CD4-positive, alpha-beta T cell (primary cell): ENCODE measurements at regions of chr6 and their contacts with region 1.

Region 1: DNA sequence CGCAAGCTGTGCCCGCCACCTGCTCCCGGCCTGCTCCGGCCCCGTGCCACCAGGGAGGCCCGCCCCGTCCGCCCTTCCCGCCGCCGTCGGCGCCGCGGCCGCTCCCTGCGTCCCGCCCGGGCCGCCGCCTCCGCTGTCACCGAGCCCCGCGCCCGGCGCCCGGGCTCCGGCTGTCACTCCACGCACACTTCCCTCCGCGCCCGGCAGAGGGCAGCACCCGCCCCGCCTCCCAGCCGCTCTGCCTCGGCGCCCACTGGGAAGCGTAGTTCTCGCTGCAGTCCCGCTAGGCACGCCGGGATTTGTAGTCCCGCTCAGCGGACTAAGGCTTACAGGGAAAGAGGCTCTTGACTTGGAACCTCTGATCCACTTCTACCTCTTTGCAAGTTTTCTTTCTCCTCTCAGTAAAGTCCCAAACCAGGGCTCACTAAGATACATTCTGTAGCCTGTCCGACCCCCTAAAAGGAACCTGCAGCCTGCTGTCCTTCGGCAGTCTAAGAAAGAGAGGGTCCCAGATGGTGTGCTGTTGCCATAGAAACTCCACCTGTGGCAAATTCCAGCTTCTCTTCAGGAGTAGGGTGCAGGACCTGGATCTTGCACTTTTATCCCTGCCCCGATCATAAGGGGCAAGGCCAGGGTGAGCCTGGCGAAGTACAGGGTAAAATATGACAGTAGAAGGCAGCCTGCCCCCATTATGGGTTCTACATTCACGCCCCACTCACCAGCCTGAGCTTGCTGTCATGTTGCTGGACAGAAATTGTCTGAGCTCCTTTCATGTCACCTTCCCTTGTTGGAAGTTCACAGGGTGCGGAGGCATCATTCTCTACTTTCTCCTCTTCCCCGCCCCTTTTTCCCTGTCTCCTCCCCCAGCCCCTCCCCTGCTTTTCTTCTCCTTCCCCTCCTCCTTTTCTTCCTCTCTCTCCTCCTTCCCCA is at the start of gene TFEB:
- DNase-seq: peak; percentile 89 to 96 (median 93)
- ATAC-seq: peak; percentile 70
- H3K4me3 ChIP-seq: peak within 1 kb of the TSS; percentile 73
- H3K4me3 Mint-ChIP-seq: peak within 1 kb of the TSS; percentile 97
- H3K27ac ChIP-seq: peak within 1 kb of the TSS; percentile 77 to 80
- H3K27ac Mint-ChIP-seq: peak within 1 kb of the TSS; percentile 88
- H3K4me1 ChIP-seq: peaks cover 37% of the 10 kb centered on the region
- H3K4me1 Mint-ChIP-seq: peaks cover 33% of the 10 kb centered on the region
- H3K27me3 ChIP-seq: peaks cover 0 to 3% of the 10 kb centered on the region in 2 experiments
- H3K27me3 Mint-ChIP-seq: no peaks in the 10 kb centered on the region
- CTCF ChIP-seq: peak; percentile 73
- total RNA-seq, gene TFEB: 23.8 to 24.1 TPM

Region 2: DNA sequence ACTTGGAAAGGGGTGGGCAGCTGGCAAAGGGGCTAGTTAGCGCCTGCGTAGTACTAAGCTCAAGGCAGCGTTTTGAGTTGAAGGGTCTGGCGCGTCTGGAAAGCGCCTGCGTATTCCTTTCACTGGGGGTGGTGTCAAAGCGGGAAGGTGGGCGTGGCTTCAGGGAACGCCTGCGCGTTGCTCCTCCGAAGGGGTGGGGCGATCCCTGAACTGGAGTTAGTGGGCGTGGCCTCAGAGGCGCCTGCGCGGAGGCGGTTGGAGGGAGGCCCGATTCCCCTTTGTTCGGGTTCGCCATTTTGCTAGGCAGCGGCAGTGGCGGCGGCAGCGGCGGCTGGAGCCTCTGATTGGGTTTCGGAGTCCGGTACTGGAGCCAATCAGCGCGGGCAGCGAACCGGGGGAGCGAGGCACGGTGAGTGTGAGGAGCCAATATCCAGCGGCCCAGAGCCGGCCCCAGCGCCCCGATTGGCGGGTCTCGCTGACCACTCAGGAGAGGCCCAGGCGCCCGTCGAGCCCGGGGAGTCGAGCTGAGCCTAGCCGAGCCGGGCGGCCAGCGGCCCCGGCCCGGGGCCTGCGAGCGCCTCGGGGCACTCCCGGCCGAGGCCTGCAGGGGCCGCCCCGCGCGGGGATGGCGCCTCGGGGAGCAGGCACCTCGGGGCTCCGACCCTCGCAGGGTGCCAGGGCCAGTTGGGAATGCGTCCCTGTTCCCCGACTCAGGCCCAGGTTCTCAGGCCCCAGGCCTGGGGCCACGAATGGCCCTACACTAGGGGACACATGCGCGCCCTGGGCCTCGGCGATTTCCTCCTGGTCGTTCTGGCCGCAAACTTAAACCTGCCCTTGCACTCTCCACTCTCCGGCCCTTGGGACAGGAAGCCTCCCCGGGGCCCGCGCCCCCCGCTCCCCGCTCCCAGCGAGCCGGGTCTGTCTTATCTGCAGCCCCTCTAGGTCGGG is 662.7 kb before region 1 on chr6 and contains the start of gene NFYA:
- CTCF ChIA-PET with region 1: no interaction called
- POLR2A ChIA-PET with region 1: interaction called, 4 read pairs
- intact Hi-C with region 1: loop called in 1 of 2 experiments (anchors 5 kb)
- DNase-seq: peak in 13 of 14 experiments; percentile 100
- ATAC-seq: peak; percentile 62
- H3K4me3 ChIP-seq: peak within 1 kb of the TSS; percentile 70
- H3K4me3 Mint-ChIP-seq: peak within 1 kb of the TSS; percentile 93
- H3K27ac ChIP-seq: peak within 1 kb of the TSS; percentile 95 to 96
- H3K27ac Mint-ChIP-seq: peak within 1 kb of the TSS; percentile 88
- H3K4me1 ChIP-seq: peaks cover 23% of the 10 kb centered on the region
- H3K4me1 Mint-ChIP-seq: peaks cover 51% of the 10 kb centered on the region
- H3K27me3 ChIP-seq: no peaks in the 10 kb centered on the region
- H3K27me3 Mint-ChIP-seq: no peaks in the 10 kb centered on the region
- CTCF ChIP-seq: peak; percentile 33
- total RNA-seq, gene NFYA: 26.7 to 27.3 TPM

Region 3: GRCh38 chr6:41602864-41603608 is 132.7 kb before region 1 on chr6:
- CTCF ChIA-PET with region 1: no interaction called
- POLR2A ChIA-PET with region 1: no interaction called
- intact Hi-C with region 1: loop called in 1 of 2 experiments (anchors 5 kb)
- DNase-seq: peak; percentile 54 to 86 (median 66)
- ATAC-seq: peak; percentile 80
- H3K4me3 ChIP-seq: no peak overlapping the region
- H3K4me3 Mint-ChIP-seq: no peak overlapping the region
- H3K27ac ChIP-seq: no peak overlapping the region
- H3K27ac Mint-ChIP-seq: no peak overlapping the region
- H3K4me1 ChIP-seq: peaks cover 8% of the 10 kb centered on the region
- H3K4me1 Mint-ChIP-seq: no peaks in the 10 kb centered on the region
- H3K27me3 ChIP-seq: peaks cover 0 to 3% of the 10 kb centered on the region in 2 experiments
- H3K27me3 Mint-ChIP-seq: no peaks in the 10 kb centered on the region
- CTCF ChIP-seq: peak; percentile 80

Region 4: GRCh38 chr6:41644297-41644879 is 91.3 kb before region 1 on chr6:
- CTCF ChIA-PET with region 1: no interaction called
- POLR2A ChIA-PET with region 1: no interaction called
- intact Hi-C with region 1: no loop called
- DNase-seq: no peak
- ATAC-seq: no peak
- H3K4me3 ChIP-seq: no peak overlapping the region
- H3K4me3 Mint-ChIP-seq: no peak overlapping the region
- H3K27ac ChIP-seq: no peak overlapping the region
- H3K27ac Mint-ChIP-seq: no peak overlapping the region
- H3K4me1 ChIP-seq: no peaks in the 10 kb centered on the region
- H3K4me1 Mint-ChIP-seq: peaks cover 6% of the 10 kb centered on the region
- H3K27me3 ChIP-seq: peaks cover 1 to 11% of the 10 kb centered on the region in 2 experiments
- H3K27me3 Mint-ChIP-seq: peaks cover 44% of the 10 kb centered on the region
- CTCF ChIP-seq: no peak

Region 5: GRCh38 chr6:41779793-41780545 is 44.3 kb after region 1 on chr6 and contains the start of gene FRS3:
- CTCF ChIA-PET with region 1: no interaction called
- POLR2A ChIA-PET with region 1: interaction called, 3 read pairs
- intact Hi-C with region 1: loop called in 1 of 2 experiments (anchors 1 kb)
- DNase-seq: peak; percentile 95 to 100 (median 99)
- ATAC-seq: peak; percentile 97
- H3K4me3 ChIP-seq: peak within 1 kb of the TSS; percentile 75
- H3K4me3 Mint-ChIP-seq: peak within 1 kb of the TSS; percentile 99
- H3K27ac ChIP-seq: no peak within 1 kb of the TSS
- H3K27ac Mint-ChIP-seq: peak within 1 kb of the TSS; percentile 68
- H3K4me1 ChIP-seq: peaks cover 24% of the 10 kb centered on the region
- H3K4me1 Mint-ChIP-seq: peaks cover 25% of the 10 kb centered on the region
- H3K27me3 ChIP-seq: peaks cover 7 to 8% of the 10 kb centered on the region in 2 experiments
- H3K27me3 Mint-ChIP-seq: peaks cover 11% of the 10 kb centered on the region
- CTCF ChIP-seq: peak; percentile 75
- total RNA-seq, gene FRS3: 4.6 to 5.4 TPM

Region 6: GRCh38 chr6:41920921-41921711 is 185.4 kb after region 1 on chr6 and contains the starts of genes BYSL and MED20:
- CTCF ChIA-PET with region 1: interaction called, 5 read pairs
- POLR2A ChIA-PET with region 1: no interaction called
- intact Hi-C with region 1: loop called in 1 of 2 experiments (anchors 2 kb)
- DNase-seq: peak; percentile 89 to 97 (median 93)
- ATAC-seq: peak; percentile 90
- H3K4me3 ChIP-seq: peak within 1 kb of the TSS; percentile 78
- H3K4me3 Mint-ChIP-seq: peak within 1 kb of the TSS; percentile 99
- H3K27ac ChIP-seq: peak within 1 kb of the TSS; percentile 97 to 98
- H3K27ac Mint-ChIP-seq: peak within 1 kb of the TSS; percentile 94
- H3K4me1 ChIP-seq: peaks cover 31% of the 10 kb centered on the region
- H3K4me1 Mint-ChIP-seq: peaks cover 55% of the 10 kb centered on the region
- H3K27me3 ChIP-seq: no peaks in the 10 kb centered on the region
- H3K27me3 Mint-ChIP-seq: no peaks in the 10 kb centered on the region
- CTCF ChIP-seq: peak; percentile 97
- total RNA-seq, gene BYSL: 1.2 to 1.6 TPM
- total RNA-seq, gene MED20: 1.3 to 1.6 TPM

Region 7: GRCh38 chr6:42217519-42218367 is 482.1 kb after region 1 on chr6 and contains the start of gene MRPS10:
- CTCF ChIA-PET with region 1: no interaction called
- POLR2A ChIA-PET with region 1: no interaction called
- intact Hi-C with region 1: loop called in 1 of 2 experiments (anchors 2 kb)
- DNase-seq: peak; percentile 84 to 96 (median 86)
- ATAC-seq: peak; percentile 98
- H3K4me3 ChIP-seq: peak within 1 kb of the TSS; percentile 77
- H3K4me3 Mint-ChIP-seq: peak within 1 kb of the TSS; percentile 97
- H3K27ac ChIP-seq: peak within 1 kb of the TSS; percentile 60 to 65
- H3K27ac Mint-ChIP-seq: peak within 1 kb of the TSS; percentile 92
- H3K4me1 ChIP-seq: peaks cover 26% of the 10 kb centered on the region
- H3K4me1 Mint-ChIP-seq: peaks cover 23% of the 10 kb centered on the region
- H3K27me3 ChIP-seq: no peaks in the 10 kb centered on the region
- H3K27me3 Mint-ChIP-seq: no peaks in the 10 kb centered on the region
- CTCF ChIP-seq: no peak
- total RNA-seq, gene MRPS10: 17.1 to 18.4 TPM

Region 8: GRCh38 chr6:43629505-43630300 is 1894.0 kb after region 1 on chr6:
- CTCF ChIA-PET with region 1: no interaction called
- POLR2A ChIA-PET with region 1: no interaction called
- intact Hi-C with region 1: loop called in 1 of 2 experiments (anchors 5 kb)
- DNase-seq: peak; percentile 65 to 96 (median 82)
- ATAC-seq: peak; percentile 58
- H3K4me3 ChIP-seq: peak overlapping the region; percentile 92
- H3K4me3 Mint-ChIP-seq: peak overlapping the region; percentile 98
- H3K27ac ChIP-seq: peak overlapping the region; percentile 86 to 90
- H3K27ac Mint-ChIP-seq: peak overlapping the region; percentile 94
- H3K4me1 ChIP-seq: peaks cover 40% of the 10 kb centered on the region
- H3K4me1 Mint-ChIP-seq: peaks cover 41% of the 10 kb centered on the region
- H3K27me3 ChIP-seq: no peaks in the 10 kb centered on the region
- H3K27me3 Mint-ChIP-seq: no peaks in the 10 kb centered on the region
- CTCF ChIP-seq: no peak